Activated CD4-positive, alpha-beta T cell treated with anti-CD3 and anti-CD28 coated beads, Interleukin-2, amount 10 ng/mL, durations not matched to agents 7 days and 5 days (primary cell): ENCODE measurements at regions of chr17 and their contacts with region 1.

Region 1: GRCh38 chr17:33451221-33451620 is 158.1 kb upstream of the ASIC2 start:
- DNase-seq: no peak
- H3K4me3 Mint-ChIP-seq: no peak overlapping the region
- H3K27ac Mint-ChIP-seq: no peak overlapping the region
- H3K4me1 Mint-ChIP-seq: no peaks in the 10 kb centered on the region
- H3K27me3 Mint-ChIP-seq: peaks cover under 1% of the 10 kb centered on the region

Region 2: DNA sequence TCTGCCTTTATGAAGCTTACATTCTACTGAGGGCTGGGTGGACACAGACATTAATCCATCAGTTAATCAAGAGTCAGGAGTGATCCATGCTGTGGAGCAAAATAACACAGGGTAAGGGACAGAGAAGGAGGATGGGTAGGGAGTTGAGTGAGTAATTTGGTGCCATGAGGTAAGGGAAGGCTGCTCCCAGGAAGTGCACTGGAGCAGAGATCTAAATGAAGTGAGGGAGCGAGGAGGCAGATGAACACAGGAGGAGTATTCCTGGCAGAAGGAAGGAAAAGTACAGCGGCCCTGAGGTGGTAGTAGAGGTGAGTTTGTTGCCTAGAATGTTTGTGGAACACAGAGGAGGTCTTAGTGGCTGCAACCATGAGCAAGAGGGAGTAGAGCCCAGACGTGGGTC is 192.9 kb before region 1 on chr17:
- CTCF ChIA-PET with region 1: interaction called, 10 read pairs
- POLR2A ChIA-PET with region 1: no interaction called
- DNase-seq: no peak
- H3K4me3 Mint-ChIP-seq: no peak overlapping the region
- H3K27ac Mint-ChIP-seq: no peak overlapping the region
- H3K4me1 Mint-ChIP-seq: no peaks in the 10 kb centered on the region
- H3K27me3 Mint-ChIP-seq: no peaks in the 10 kb centered on the region